HepG2 (cell line): ENCODE measurements at regions of chr22 and their contacts with region 1.

Region 1: DNA sequence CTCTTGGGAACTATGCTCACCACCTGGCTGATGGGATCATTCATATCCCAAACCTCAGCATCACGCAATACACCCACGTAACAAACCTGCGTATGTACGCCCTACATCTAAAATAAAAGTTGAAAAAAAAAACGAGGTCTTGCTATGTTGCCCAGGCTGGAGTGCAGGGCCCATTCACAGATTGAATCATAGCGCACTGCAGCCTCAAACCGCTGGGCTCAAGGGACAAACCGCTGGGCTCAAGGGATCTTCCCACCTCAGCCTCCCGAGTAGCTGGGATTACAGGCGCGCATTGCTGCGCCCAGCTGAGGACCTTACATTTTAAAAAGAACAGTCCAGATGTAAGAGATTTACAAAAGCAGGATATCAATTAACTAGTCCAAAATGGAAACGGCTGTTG is 41.9 kb upstream of the EMID1 start:
- DNase-seq: no peak
- ATAC-seq: no peak
- H3K4me3 ChIP-seq: no peak overlapping the region
- H3K27ac ChIP-seq: no peak overlapping the region
- H3K4me1 ChIP-seq: no peaks in the 10 kb centered on the region
- H3K27me3 ChIP-seq: peaks cover 0 to 12% of the 10 kb centered on the region in 2 experiments; a peak in 2 of 5 replicates
- CTCF ChIP-seq: no peak
- EP300 ChIP-seq: no peak
- POLR2A ChIP-seq: no peak
- RAD21 ChIP-seq: no peak

Region 2: GRCh38 chr22:29175312-29175835 is 11.6 kb after region 1 on chr22:
- CTCF ChIA-PET with region 1: no interaction called
- POLR2A ChIA-PET with region 1: no interaction called
- in situ Hi-C with region 1: no loop called
- intact Hi-C with region 1: loop called (anchors 1 kb)
- DNase-seq: no peak
- ATAC-seq: no peak
- H3K4me3 ChIP-seq: no peak overlapping the region
- H3K27ac ChIP-seq: no peak overlapping the region
- H3K4me1 ChIP-seq: peaks cover 7% of the 10 kb centered on the region; the same call in 1 of the 2 replicates
- H3K27me3 ChIP-seq: peaks cover 2 to 10% of the 10 kb centered on the region in 2 experiments; a peak in 3 of 5 replicates
- CTCF ChIP-seq: no peak
- EP300 ChIP-seq: no peak
- POLR2A ChIP-seq: no peak
- RAD21 ChIP-seq: no peak